HepG2 (cell line): ENCODE measurements at regions of chr2 and their contacts with region 1.

Region 1: GRCh38 chr2:19362755-19363473 is 4.5 kb upstream of the OSR1 start:
- DNase-seq: peak; percentile 79
- ATAC-seq: peak; percentile 56
- H3K4me3 ChIP-seq: peak overlapping the region; percentile 59 to 84 (median 71)
- H3K27ac ChIP-seq: no peak overlapping the region
- H3K4me1 ChIP-seq: peaks cover 27% of the 10 kb centered on the region
- H3K27me3 ChIP-seq: peaks cover 14 to 69% of the 10 kb centered on the region in 2 experiments
- CTCF ChIP-seq: peak; percentile 87
- EP300 ChIP-seq: 0 out of 4 replicates have a peak, but pooled peaks of 1 of the 2 experiments have one; percentile 3
- POLR2A ChIP-seq: no peak
- RAD21 ChIP-seq: peak; percentile 89

Region 2: GRCh38 chr2:18387441-18388206 is 975.3 kb before region 1 on chr2:
- CTCF ChIA-PET with region 1: interaction called, 6 read pairs
- POLR2A ChIA-PET with region 1: no interaction called
- in situ Hi-C with region 1: no loop called
- intact Hi-C with region 1: loop called (anchors 2 kb)
- DNase-seq: peak; percentile 71
- ATAC-seq: peak; percentile 97
- H3K4me3 ChIP-seq: peak overlapping the region in 1 of 3 experiments; percentile 43; a peak in 1 of 6 replicates
- H3K27ac ChIP-seq: no peak overlapping the region
- H3K4me1 ChIP-seq: 0 out of 2 replicates have a peak, but pooled peaks cover 8% of the 10 kb centered on the region
- H3K27me3 ChIP-seq: no peaks in the 10 kb centered on the region
- CTCF ChIP-seq: peak; percentile 88
- EP300 ChIP-seq: 0 out of 4 replicates have a peak, but pooled peaks of 1 of the 2 experiments have one; percentile 8
- POLR2A ChIP-seq: no peak
- RAD21 ChIP-seq: peak; percentile 57; the same call in 1 of the 2 replicates

Region 3: GRCh38 chr2:18520451-18521425 is 842.2 kb before region 1 on chr2:
- CTCF ChIA-PET with region 1: interaction called, 20 read pairs
- POLR2A ChIA-PET with region 1: no interaction called
- in situ Hi-C with region 1: loop called (anchors 5 kb)
- intact Hi-C with region 1: loop called (anchors 1 kb)
- DNase-seq: peak; percentile 71
- ATAC-seq: peak; percentile 96
- H3K4me3 ChIP-seq: no peak overlapping the region
- H3K27ac ChIP-seq: no peak overlapping the region
- H3K4me1 ChIP-seq: no peaks in the 10 kb centered on the region
- H3K27me3 ChIP-seq: peaks cover 2 to 11% of the 10 kb centered on the region in 2 experiments; a peak in 4 of 5 replicates
- CTCF ChIP-seq: peak; percentile 93
- EP300 ChIP-seq: no peak
- POLR2A ChIP-seq: no peak
- RAD21 ChIP-seq: peak; percentile 95

Region 4: DNA sequence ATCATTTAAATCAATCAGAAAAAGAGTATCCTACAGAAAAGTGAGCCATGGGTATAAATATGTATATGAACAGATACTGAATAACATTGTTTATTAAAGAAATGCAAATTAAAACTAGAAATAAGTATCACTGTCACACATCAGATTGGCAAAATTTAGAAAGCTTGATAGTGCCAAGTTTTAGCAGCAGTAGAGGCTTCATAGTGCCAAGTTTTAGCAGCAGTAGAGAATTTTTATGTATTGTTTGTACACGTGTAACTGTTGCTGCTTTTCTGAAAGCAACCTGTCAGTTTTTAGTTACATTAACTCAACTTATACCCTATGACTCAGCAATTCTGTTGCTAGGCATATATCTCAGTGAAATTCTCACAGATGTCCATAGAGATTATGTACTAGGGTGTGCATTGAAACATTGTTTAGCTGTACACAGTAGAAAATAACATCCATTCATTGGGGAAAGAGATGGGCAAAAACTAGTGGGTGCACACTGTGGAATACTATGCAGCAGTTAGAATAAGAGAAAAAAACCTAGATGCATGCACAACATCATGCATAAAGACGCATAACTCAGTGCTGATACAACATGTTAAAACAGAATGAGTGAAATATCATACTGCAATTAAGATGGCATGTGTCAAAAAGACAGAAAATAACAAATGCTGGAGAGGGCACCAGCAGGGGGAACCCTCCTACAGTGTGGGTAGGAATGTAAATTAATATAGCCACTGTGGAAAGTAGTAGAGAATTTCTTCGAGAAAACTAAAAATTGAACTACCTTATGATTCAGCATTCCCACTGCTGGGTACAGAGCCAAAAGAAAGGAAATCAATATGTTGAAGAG is 479.1 kb before region 1 on chr2:
- CTCF ChIA-PET with region 1: interaction called, 9 read pairs
- POLR2A ChIA-PET with region 1: no interaction called
- in situ Hi-C with region 1: loop called (anchors 10 kb)
- intact Hi-C with region 1: loop called (anchors 1 kb)
- DNase-seq: peak; percentile 7
- ATAC-seq: peak; percentile 53; the same call in 2 of the 3 replicates
- H3K4me3 ChIP-seq: no peak overlapping the region
- H3K27ac ChIP-seq: no peak overlapping the region
- H3K4me1 ChIP-seq: peaks cover under 1% of the 10 kb centered on the region
- H3K27me3 ChIP-seq: no peaks in the 10 kb centered on the region
- CTCF ChIP-seq: peak; percentile 57
- EP300 ChIP-seq: no peak
- POLR2A ChIP-seq: no peak
- RAD21 ChIP-seq: no peak

Region 5: GRCh38 chr2:19114754-19115231 is 248.1 kb before region 1 on chr2:
- CTCF ChIA-PET with region 1: no interaction called
- POLR2A ChIA-PET with region 1: no interaction called
- in situ Hi-C with region 1: no loop called
- intact Hi-C with region 1: loop called (anchors 10 kb)
- DNase-seq: no peak
- ATAC-seq: no peak
- H3K4me3 ChIP-seq: no peak overlapping the region
- H3K27ac ChIP-seq: no peak overlapping the region
- H3K4me1 ChIP-seq: peaks cover 9% of the 10 kb centered on the region
- H3K27me3 ChIP-seq: no peaks in the 10 kb centered on the region
- CTCF ChIP-seq: no peak
- EP300 ChIP-seq: no peak
- POLR2A ChIP-seq: no peak
- RAD21 ChIP-seq: no peak

Region 6: DNA sequence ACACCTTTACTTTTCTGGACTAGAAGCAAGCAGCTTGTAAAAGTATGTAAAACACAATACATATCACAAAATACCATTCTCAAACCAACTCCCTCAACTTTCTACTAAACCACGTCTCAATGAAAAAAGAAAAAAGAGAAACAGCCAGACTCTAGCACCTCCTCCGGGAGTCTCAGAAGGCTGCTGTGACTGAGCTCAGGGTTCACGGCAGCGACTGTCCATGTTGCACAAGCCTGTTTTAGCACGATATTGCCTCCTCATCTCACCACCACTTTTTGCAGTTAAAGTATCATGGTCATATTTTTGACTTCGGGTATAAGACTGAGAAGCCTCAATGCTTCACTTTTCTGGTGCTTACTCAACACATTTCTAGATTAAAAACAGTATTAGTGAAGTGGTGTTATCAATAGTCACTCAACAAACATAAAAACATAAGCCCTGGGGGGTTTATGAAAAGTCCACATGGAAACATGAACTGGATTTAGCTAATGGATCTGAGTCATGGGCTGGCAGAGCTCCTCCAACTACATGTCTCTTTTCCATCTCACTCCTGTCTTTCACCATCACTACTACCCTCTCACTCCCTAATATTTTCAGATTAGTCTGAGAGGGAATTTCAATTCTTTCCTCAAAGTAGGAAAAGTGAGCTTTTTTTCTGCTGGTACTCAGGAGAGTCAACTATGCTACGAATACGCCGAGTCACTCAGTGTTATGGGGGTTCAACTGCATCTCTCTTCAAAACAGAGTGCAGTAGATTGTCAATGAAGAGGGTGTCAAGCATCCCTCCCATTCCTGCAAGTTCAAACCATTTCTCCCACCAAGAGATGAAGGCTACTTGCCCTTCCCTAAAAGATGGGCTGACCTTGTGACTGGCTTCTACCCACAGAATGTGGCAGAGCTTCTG is 118.2 kb before region 1 on chr2:
- CTCF ChIA-PET with region 1: no interaction called
- POLR2A ChIA-PET with region 1: no interaction called
- in situ Hi-C with region 1: no loop called
- intact Hi-C with region 1: no loop called
- DNase-seq: no peak
- ATAC-seq: peak; percentile 48; the same call in 2 of the 3 replicates
- H3K4me3 ChIP-seq: no peak overlapping the region
- H3K27ac ChIP-seq: no peak overlapping the region
- H3K4me1 ChIP-seq: no peaks in the 10 kb centered on the region
- H3K27me3 ChIP-seq: no peaks in the 10 kb centered on the region
- CTCF ChIP-seq: no peak
- EP300 ChIP-seq: no peak
- POLR2A ChIP-seq: no peak
- RAD21 ChIP-seq: no peak

Region 7: GRCh38 chr2:19347619-19348562 is 15.0 kb before region 1 on chr2:
- CTCF ChIA-PET with region 1: interaction called, 3 read pairs
- POLR2A ChIA-PET with region 1: interaction called, 55 read pairs
- in situ Hi-C with region 1: no loop called
- intact Hi-C with region 1: no loop called
- DNase-seq: peak; percentile 92
- ATAC-seq: peak; percentile 87
- H3K4me3 ChIP-seq: peak overlapping the region; percentile 80 to 93 (median 86)
- H3K27ac ChIP-seq: peak overlapping the region; percentile 69
- H3K4me1 ChIP-seq: peaks cover 27% of the 10 kb centered on the region
- H3K27me3 ChIP-seq: no peaks in the 10 kb centered on the region; a peak in 1 of 5 replicates
- CTCF ChIP-seq: peak; percentile 17; the same call in 1 of the 2 replicates
- EP300 ChIP-seq: no peak
- POLR2A ChIP-seq: peak; percentile 97 to 99
- RAD21 ChIP-seq: peak; percentile 44

Region 8: DNA sequence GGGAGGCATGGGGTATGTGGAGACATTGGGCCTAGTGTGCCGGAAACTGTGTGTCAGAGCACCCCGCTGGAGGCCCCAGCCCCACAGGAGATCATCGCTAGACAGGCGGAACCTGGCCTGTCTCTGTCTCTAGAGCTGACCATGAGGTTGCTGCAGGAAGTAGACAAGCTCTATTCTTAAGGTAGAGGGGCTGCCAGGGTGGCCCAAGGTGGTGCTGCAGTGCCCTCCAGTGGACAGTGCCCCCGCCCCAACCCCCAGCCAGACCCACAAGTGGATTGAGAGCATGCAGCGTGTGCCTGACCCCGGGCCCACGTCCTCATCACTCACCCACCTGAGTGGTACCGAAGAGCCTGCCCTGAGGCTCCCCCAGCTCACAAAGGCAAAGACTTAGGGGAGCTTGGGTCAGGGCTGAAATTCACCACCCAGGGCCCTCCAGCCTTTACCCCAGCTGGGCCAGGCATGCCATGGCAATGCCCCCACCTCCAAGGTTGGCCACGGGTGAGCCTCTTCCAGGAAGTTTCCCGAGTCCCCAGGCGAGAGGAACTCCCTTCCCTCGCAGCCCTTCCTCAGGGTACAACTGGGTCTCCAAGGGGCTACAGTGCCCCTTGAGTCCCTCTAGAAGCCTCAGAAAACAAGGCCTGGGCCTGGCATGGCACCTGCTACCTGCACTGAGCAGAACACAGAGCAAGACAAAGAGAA is 383.8 kb after region 1 on chr2:
- CTCF ChIA-PET with region 1: no interaction called
- POLR2A ChIA-PET with region 1: no interaction called
- in situ Hi-C with region 1: no loop called
- intact Hi-C with region 1: loop called (anchors 5 kb)
- DNase-seq: peak; percentile 19
- ATAC-seq: peak; percentile 75
- H3K4me3 ChIP-seq: no peak overlapping the region
- H3K27ac ChIP-seq: no peak overlapping the region
- H3K4me1 ChIP-seq: peaks cover 14% of the 10 kb centered on the region
- H3K27me3 ChIP-seq: peaks cover 4 to 17% of the 10 kb centered on the region in 2 experiments; a peak in 4 of 5 replicates
- CTCF ChIP-seq: peak; percentile 79
- EP300 ChIP-seq: no peak
- POLR2A ChIP-seq: no peak
- RAD21 ChIP-seq: peak; percentile 46

Region 9: DNA sequence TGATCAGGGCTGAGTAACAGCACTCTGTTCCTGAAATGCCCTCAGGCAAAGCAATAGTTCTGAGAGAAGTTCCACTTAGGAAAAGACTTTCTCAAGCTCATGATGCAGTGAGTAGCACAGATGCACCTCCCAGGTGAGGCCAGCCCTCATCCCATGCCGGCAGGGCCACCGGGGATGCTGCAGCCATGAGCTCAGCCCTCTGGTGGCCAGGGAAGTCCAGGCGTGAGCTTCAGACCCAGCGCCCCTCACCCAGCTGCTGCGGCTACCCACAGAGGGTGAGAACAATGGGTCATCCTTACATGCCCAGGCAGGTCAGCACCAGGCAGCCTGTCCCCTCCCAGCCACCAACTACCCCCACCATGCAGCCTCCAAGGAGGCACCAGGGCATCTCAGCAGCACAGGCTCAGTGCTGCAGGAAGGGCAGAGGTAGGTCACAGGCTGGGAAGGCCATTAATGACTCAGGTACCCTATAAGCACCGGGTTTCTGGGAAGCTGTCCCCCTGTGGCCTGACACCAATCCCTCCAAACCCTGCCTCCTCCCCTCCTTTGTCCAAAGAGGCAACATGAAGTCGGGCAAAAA is 488.3 kb after region 1 on chr2:
- CTCF ChIA-PET with region 1: no interaction called
- POLR2A ChIA-PET with region 1: no interaction called
- in situ Hi-C with region 1: no loop called
- intact Hi-C with region 1: no loop called
- DNase-seq: no peak
- ATAC-seq: peak; percentile 84
- H3K4me3 ChIP-seq: no peak overlapping the region
- H3K27ac ChIP-seq: no peak overlapping the region
- H3K4me1 ChIP-seq: peaks cover 27% of the 10 kb centered on the region
- H3K27me3 ChIP-seq: peaks cover 0 to 3% of the 10 kb centered on the region in 2 experiments; a peak in 3 of 5 replicates
- CTCF ChIP-seq: peak; percentile 58
- EP300 ChIP-seq: no peak
- POLR2A ChIP-seq: no peak
- RAD21 ChIP-seq: no peak